ENCODE measurements at regions of chr11 and their contacts with region 1.

Region 1: GRCh38 chr11:44538375-44539054 is 26.9 kb upstream of the CD82 start:
- DNase-seq: peak; percentile 52
- ATAC-seq: peak; percentile 99
- H3K4me3 ChIP-seq: no peak overlapping the region
- H3K27ac ChIP-seq: no peak overlapping the region
- H3K4me1 ChIP-seq: no peaks in the 10 kb centered on the region; a peak in 1 of 4 replicates
- H3K27me3 ChIP-seq: no peaks in the 10 kb centered on the region
- CTCF ChIP-seq: peak; percentile 88 to 97 (median 93)
- POLR2A ChIP-seq: no peak
- RAD21 ChIP-seq: peak; percentile 96

Region 2: DNA sequence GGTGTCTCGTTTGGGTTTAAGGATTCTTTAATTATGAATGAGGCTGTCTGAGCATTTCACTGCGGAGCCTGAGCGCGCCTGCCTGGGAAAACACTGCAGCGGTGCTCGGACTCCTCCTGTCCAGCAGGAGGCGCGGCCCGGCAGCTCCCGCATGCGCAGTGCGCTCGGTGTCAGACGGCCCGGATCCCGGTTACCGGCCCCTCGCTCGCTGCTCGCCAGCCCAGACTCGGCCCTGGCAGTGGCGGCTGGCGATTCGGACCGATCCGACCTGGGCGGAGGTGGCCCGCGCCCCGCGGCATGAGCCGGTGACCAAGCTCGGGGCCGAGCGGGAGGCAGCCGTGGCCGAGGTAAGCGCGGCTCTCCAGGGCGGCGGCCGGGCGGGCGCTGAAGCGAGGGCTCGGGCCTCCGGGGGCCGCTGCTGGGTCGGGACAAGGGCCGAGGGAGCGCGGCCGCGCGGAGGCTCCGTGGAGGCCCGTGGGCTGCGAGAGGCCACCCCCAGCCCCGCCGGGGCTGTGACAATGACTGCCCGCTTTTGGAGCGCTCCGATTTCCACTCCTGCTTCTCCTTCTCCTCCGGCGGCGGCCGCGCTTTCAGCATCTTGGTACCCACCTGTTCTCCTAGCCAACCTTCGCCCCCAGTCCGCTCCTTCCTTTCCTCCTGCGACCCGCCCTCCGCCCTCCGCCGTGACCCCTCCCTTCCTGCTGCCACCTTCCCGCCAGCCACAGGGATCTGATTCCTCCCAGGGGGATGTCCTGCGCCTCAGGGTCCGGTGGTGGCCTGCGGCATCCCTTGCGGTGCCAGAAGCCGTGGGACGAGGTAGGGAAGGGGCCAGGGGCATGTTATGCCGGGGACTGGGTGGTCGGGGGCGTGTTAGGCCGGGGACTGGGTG is 442.8 kb before region 1 on chr11 and contains the start of gene EXT2:
- CTCF ChIA-PET with region 1: interaction called, 3 read pairs
- POLR2A ChIA-PET with region 1: no interaction called
- RAD21 ChIA-PET with region 1: no interaction called
- intact Hi-C with region 1: loop called (anchors 2 kb)
- DNase-seq: peak; percentile 49
- ATAC-seq: peak; percentile 95
- H3K4me3 ChIP-seq: peak within 1 kb of the TSS; percentile 81 to 89
- H3K27ac ChIP-seq: peak within 1 kb of the TSS; percentile 64
- H3K4me1 ChIP-seq: peaks cover 3 to 19% of the 10 kb centered on the region in 2 experiments; a peak in 2 of 4 replicates
- H3K27me3 ChIP-seq: no peaks in the 10 kb centered on the region
- CTCF ChIP-seq: peak; percentile 49 to 83 (median 77); a peak in 5 of 6 replicates
- POLR2A ChIP-seq: peak; percentile 24
- RAD21 ChIP-seq: no peak
- total RNA-seq, gene EXT2: 42.8 TPM

Region 3: DNA sequence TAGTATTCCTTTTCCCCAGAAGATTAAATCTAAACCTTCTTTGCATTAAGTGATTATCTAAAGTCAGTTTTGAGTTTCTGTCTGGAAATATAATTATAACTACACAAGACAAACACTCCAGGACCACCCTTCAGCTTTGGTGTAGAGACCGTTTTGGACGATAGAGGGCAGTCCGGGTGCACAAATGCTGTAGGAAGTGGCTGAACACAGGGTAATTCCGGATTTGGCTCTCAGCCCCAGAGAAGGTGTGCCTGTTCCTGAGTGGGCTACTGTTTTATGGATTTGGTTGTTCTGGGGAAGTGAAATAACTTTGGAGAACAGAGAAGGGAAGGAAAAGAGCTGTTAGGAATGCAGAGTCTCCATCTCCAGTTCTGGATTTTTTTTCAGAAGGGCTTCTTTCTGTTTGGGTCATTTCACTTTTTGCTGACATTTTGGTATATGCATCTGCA is 428.3 kb before region 1 on chr11:
- CTCF ChIA-PET with region 1: no interaction called
- POLR2A ChIA-PET with region 1: no interaction called
- RAD21 ChIA-PET with region 1: no interaction called
- intact Hi-C with region 1: loop called (anchors 1 kb)
- DNase-seq: no peak
- ATAC-seq: peak; percentile 100
- H3K4me3 ChIP-seq: no peak overlapping the region
- H3K27ac ChIP-seq: no peak overlapping the region
- H3K4me1 ChIP-seq: no peaks in the 10 kb centered on the region
- H3K27me3 ChIP-seq: no peaks in the 10 kb centered on the region
- CTCF ChIP-seq: peak; percentile 53 to 90 (median 84); a peak in 5 of 6 replicates
- POLR2A ChIP-seq: no peak
- RAD21 ChIP-seq: peak; percentile 65

Region 4: DNA sequence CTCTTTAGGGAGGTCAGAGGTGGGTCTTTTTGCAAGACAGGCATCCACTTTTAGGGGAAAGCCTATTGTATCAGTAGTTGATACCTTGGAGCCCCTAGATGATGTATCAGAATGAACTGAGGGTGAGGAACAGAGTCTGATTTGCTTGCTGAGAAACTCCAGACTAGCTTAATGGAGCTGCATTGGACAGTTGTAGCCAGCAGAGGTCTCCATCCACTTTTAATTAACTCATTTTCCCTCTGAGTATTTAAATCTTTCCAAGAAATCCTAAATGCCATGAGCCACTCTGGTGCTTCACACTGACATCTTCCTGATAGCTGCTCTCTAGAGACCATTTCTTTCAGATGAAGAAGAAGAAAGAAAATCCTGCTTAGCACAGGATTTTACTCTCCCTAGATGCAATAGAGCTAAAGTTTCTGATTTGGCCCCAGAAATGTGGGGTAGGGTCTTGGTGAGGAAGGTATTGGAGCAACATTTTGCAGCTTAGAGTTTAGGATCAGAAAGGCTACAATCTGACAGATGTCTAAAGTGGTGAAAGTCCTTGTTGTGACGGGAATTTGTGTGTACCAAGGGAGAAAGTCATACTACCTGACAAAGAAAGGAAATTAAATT is 405.1 kb before region 1 on chr11:
- CTCF ChIA-PET with region 1: interaction called, 6 read pairs
- POLR2A ChIA-PET with region 1: no interaction called
- RAD21 ChIA-PET with region 1: interaction called in 1 of 2 experiments, 3 read pairs
- intact Hi-C with region 1: loop called (anchors 1 kb)
- DNase-seq: no peak
- ATAC-seq: peak; percentile 76
- H3K4me3 ChIP-seq: no peak overlapping the region
- H3K27ac ChIP-seq: no peak overlapping the region
- H3K4me1 ChIP-seq: no peaks in the 10 kb centered on the region
- H3K27me3 ChIP-seq: no peaks in the 10 kb centered on the region
- CTCF ChIP-seq: peak; percentile 36 to 67 (median 64); a peak in 5 of 6 replicates
- POLR2A ChIP-seq: no peak
- RAD21 ChIP-seq: peak; percentile 58

Region 5: GRCh38 chr11:44286268-44286880 is 252.1 kb before region 1 on chr11:
- CTCF ChIA-PET with region 1: interaction called, 6 read pairs
- POLR2A ChIA-PET with region 1: no interaction called
- RAD21 ChIA-PET with region 1: interaction called in 1 of 2 experiments, 3 read pairs
- intact Hi-C with region 1: loop called (anchors 1 kb)
- DNase-seq: peak; percentile 43
- ATAC-seq: peak; percentile 94
- H3K4me3 ChIP-seq: no peak overlapping the region
- H3K27ac ChIP-seq: no peak overlapping the region
- H3K4me1 ChIP-seq: no peaks in the 10 kb centered on the region; a peak in 1 of 4 replicates
- H3K27me3 ChIP-seq: no peaks in the 10 kb centered on the region
- CTCF ChIP-seq: peak; percentile 85 to 96 (median 95)
- POLR2A ChIP-seq: no peak
- RAD21 ChIP-seq: peak; percentile 90

Region 6: GRCh38 chr11:44351898-44352498 is 186.5 kb before region 1 on chr11:
- CTCF ChIA-PET with region 1: no interaction called
- POLR2A ChIA-PET with region 1: no interaction called
- RAD21 ChIA-PET with region 1: no interaction called
- intact Hi-C with region 1: loop called (anchors 2 kb)
- DNase-seq: peak; percentile 13
- ATAC-seq: peak; percentile 91
- H3K4me3 ChIP-seq: no peak overlapping the region
- H3K27ac ChIP-seq: no peak overlapping the region
- H3K4me1 ChIP-seq: peaks cover 0 to 4% of the 10 kb centered on the region in 2 experiments; a peak in 1 of 4 replicates
- H3K27me3 ChIP-seq: no peaks in the 10 kb centered on the region
- CTCF ChIP-seq: peak; percentile 49 to 68 (median 67); a peak in 5 of 6 replicates
- POLR2A ChIP-seq: no peak
- RAD21 ChIP-seq: peak; percentile 56

Measured in HCT116 (cell line).